Mammary epithelial cell (primary cell): ENCODE measurements at regions of chr5 and their contacts with region 1.

Region 1: GRCh38 chr5:95961617-95962474 is at the start of gene ELL2:
- DNase-seq: peak; percentile 100
- H3K4me3 ChIP-seq: peak within 1 kb of the TSS; percentile 49 to 99 (median 77)
- H3K27ac ChIP-seq: peak within 1 kb of the TSS; percentile 98
- H3K4me1 ChIP-seq: peaks cover 32% of the 10 kb centered on the region
- H3K27me3 ChIP-seq: no peaks in the 10 kb centered on the region
- CTCF ChIP-seq: no peak
- total RNA-seq, gene ELL2: 161 to 277 TPM

Region 2: DNA sequence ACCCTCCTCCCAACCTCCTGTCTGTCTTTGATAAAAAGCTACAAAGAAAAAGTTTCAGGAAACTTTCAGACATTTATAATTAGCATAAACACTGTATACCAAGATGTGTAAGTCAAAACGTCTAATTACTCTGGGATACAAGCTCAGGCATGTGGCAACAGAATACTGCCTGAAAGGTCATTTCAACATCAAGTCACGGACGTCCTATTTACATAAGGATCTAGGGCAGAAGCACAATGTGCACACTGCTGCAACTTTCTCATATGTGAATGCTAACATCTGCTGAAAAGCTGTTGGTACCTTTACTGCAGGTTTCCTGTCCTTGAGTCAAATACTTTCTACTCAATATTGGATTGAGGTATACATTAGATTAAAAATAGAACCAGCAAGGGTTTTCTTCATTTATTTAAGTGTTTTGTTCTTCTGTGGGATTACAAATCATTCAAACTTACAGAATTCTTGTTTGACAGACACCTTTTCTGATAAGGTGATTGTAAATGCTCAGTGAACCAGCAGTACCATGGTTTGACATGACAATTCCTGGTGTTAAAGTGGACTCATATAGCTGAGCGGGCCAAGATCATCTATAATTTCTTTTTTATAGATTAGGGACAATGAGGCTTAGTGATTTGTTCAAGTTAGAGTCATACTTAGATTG is 37.0 kb before region 1 on chr5:
- CTCF ChIA-PET with region 1: no interaction called
- dilution Hi-C with region 1: no loop called
- in situ Hi-C with region 1: no loop called
- intact Hi-C with region 1: loop called (anchors 1 kb)
- DNase-seq: peak; percentile 72
- H3K4me3 ChIP-seq: peak overlapping the region in 1 of 3 experiments; percentile 16
- H3K27ac ChIP-seq: peak overlapping the region; percentile 51
- H3K4me1 ChIP-seq: peaks cover 31% of the 10 kb centered on the region
- H3K27me3 ChIP-seq: no peaks in the 10 kb centered on the region
- CTCF ChIP-seq: no peak

Region 3: GRCh38 chr5:96067894-96068614 is 106.2 kb after region 1 on chr5:
- CTCF ChIA-PET with region 1: interaction called, 3 read pairs
- dilution Hi-C with region 1: no loop called
- in situ Hi-C with region 1: no loop called
- intact Hi-C with region 1: loop called (anchors 1 kb)
- DNase-seq: peak; percentile 94
- H3K4me3 ChIP-seq: no peak overlapping the region
- H3K27ac ChIP-seq: peak overlapping the region; percentile 89
- H3K4me1 ChIP-seq: peaks cover 46% of the 10 kb centered on the region
- H3K27me3 ChIP-seq: no peaks in the 10 kb centered on the region
- CTCF ChIP-seq: no peak

Region 4: DNA sequence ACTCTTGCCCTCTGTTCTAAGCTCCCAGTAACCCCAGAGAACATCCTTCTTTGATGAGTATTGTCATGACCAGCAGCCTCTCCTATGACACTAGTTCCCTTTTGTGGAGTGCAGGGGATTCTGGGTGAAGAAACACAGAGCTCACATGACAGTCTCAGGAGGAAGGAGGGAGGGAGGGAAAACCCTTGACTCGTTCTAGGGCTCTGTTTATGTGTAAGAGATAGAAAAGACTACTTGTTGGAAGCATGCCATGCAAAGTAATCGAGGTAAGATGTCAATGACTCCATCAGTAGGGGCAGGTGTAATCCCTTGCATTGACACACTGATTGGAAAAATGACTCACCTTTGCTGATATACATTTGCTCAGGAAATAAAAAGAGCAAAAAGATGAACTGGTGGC is 190.0 kb after region 1 on chr5:
- CTCF ChIA-PET with region 1: no interaction called
- dilution Hi-C with region 1: no loop called
- in situ Hi-C with region 1: no loop called
- intact Hi-C with region 1: loop called (anchors 1 kb)
- DNase-seq: no peak
- H3K4me3 ChIP-seq: no peak overlapping the region
- H3K27ac ChIP-seq: no peak overlapping the region
- H3K4me1 ChIP-seq: peaks cover 52% of the 10 kb centered on the region
- H3K27me3 ChIP-seq: no peaks in the 10 kb centered on the region
- CTCF ChIP-seq: no peak

Region 5: DNA sequence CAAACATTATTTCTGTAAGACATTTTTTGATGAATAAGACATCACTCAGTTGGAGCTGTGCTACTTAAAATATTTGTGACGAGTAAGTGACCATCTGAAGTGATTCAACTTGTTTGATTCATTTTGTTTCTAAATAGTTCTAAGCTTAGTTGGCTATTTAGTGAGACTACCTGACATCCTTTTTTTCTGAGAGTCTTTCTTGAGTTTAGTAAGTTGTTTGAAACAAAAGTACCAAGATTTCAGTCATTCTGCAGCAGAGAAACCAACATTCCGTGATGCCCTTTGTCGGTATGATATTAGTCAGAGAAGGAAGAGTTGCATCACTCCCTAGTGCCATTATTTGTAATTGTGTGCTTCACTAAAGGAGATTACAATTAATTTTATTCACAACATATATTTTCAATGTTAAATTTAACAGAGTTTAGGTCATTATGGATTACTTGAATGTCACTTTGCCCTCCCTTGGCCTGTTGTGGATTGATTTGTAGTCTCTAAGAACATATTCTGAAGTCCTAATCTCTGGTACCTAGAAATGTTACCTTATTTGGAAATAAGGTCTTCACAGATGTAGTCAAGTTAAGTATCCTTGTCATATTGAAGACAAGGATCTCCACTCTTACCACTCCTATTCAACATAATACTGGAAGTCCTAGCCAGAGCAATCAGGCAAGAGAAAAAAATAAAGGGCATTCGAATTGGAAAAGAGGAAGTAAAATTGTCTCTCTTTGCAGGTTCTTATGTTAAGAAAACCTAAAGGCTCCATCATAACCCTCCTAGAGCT is 259.0 kb after region 1 on chr5:
- CTCF ChIA-PET with region 1: no interaction called
- dilution Hi-C with region 1: no loop called
- in situ Hi-C with region 1: loop called in 1 of 2 experiments (anchors 25 kb)
- intact Hi-C with region 1: loop called (anchors 1 kb)
- DNase-seq: peak; percentile 88
- H3K4me3 ChIP-seq: peak overlapping the region in 1 of 3 experiments; percentile 14
- H3K27ac ChIP-seq: peak overlapping the region; percentile 95
- H3K4me1 ChIP-seq: peaks cover 25% of the 10 kb centered on the region
- H3K27me3 ChIP-seq: no peaks in the 10 kb centered on the region
- CTCF ChIP-seq: no peak

Region 6: GRCh38 chr5:96279801-96280542 is 318.1 kb after region 1 on chr5:
- CTCF ChIA-PET with region 1: no interaction called
- dilution Hi-C with region 1: no loop called
- in situ Hi-C with region 1: no loop called
- intact Hi-C with region 1: loop called (anchors 2 kb)
- DNase-seq: peak; percentile 94
- H3K4me3 ChIP-seq: peak overlapping the region in 2 of 3 experiments; percentile 19 to 25
- H3K27ac ChIP-seq: peak overlapping the region; percentile 97
- H3K4me1 ChIP-seq: peaks cover 36% of the 10 kb centered on the region
- H3K27me3 ChIP-seq: no peaks in the 10 kb centered on the region
- CTCF ChIP-seq: peak in 1 of 2 donors; percentile 9

Region 7: GRCh38 chr5:96595300-96596090 is 633.6 kb after region 1 on chr5:
- CTCF ChIA-PET with region 1: no interaction called
- dilution Hi-C with region 1: no loop called
- in situ Hi-C with region 1: no loop called
- intact Hi-C with region 1: loop called (anchors 10 kb)
- DNase-seq: peak; percentile 23
- H3K4me3 ChIP-seq: no peak overlapping the region
- H3K27ac ChIP-seq: no peak overlapping the region
- H3K4me1 ChIP-seq: no peaks in the 10 kb centered on the region
- H3K27me3 ChIP-seq: peaks cover 8% of the 10 kb centered on the region
- CTCF ChIP-seq: peak; percentile 50 to 63